ENCODE measurements at regions of chr12 and their contacts with region 1.

Region 1: DNA sequence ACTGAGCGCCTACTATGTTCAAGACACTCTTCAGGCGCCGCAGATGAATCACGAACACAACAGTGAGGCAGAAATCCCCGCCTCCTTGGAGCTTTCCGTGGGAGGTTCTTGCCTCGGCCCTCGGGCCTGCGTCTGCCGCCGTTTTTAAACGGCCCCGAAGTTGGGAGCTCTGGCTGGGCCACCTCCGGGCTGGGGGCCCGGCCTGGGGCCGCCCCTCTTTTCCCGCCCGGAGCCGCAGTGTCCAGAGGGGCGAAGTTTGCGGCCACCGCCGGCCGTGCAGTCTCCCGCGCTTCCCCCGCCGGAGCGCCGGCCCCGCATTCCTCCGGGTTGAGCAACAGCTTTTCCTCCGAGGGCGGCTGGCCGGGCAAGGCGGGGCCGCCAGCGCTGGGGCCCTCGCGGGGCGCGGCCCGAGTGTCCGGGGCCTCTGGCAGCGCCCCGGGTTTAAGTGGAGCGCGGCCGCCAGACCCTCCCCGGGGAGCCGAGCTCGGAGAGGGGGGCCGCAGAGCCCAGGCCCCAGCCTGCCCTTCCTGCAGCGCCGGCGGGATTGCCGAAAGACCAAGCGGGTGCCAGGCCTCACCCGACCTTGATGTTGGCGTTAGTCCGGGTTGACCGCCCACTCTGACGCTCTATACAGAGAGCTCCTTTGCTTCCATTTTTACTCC is 18.7 kb upstream of the CTDSP2 start:
- DNase-seq: peak; percentile 91
- H3K4me3 ChIP-seq: peak overlapping the region; percentile 38 to 63 (median 54)
- H3K27ac ChIP-seq: peak overlapping the region; percentile 90 to 99 (median 96)
- H3K4me1 ChIP-seq: peaks cover 0 to 61% (median 48%) of the 10 kb centered on the region in 4 donors
- H3K27me3 ChIP-seq: no peaks in the 10 kb centered on the region
- CTCF ChIP-seq: no peak
- EP300 ChIP-seq: peak in 2 of 4 donors; percentile 2 to 12
- POLR2A ChIP-seq: peak; percentile 51 to 65

Region 2: DNA sequence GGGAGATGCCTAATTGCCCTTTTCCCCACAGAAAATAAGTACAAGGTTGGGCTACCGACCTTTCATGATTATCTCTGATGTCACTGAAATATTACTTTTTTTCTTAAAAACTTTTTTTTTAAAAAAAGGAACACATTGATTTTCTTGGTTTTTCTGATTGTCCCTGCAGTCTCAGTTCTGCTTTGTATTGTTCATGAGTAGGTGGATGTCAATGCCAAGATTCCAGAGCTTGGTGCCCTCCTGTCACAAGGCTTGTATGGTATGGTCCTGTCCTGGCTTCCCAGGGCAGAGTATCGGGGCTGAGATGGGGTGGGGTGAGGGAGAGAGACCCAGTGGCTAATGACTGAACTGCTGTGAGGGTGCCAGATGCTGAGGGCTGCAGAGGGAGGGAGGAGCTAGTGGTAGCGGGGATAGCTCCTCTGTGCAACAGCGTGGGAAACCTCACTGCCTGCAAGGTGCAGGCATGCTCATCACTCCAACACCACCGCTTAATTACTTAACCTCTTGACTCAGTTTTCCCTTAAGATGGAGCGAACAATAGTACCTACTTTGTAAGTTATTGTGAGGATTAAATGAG is 14.3 kb before region 1 on chr12:
- intact Hi-C with region 1: loop called (anchors 2 kb)
- DNase-seq: no peak
- H3K4me3 ChIP-seq: no peak overlapping the region
- H3K27ac ChIP-seq: peak overlapping the region; percentile 26 to 100 (median 92)
- H3K4me1 ChIP-seq: peaks cover 0 to 55% (median 38%) of the 10 kb centered on the region in 4 donors
- H3K27me3 ChIP-seq: no peaks in the 10 kb centered on the region
- CTCF ChIP-seq: no peak
- EP300 ChIP-seq: no peak
- POLR2A ChIP-seq: no peak

Region 3: GRCh38 chr12:57893431-57894353 is 28.5 kb after region 1 on chr12:
- intact Hi-C with region 1: loop called (anchors 1 kb)
- DNase-seq: peak; percentile 100
- H3K4me3 ChIP-seq: peak overlapping the region in 2 of 4 donors; percentile 14 to 21
- H3K27ac ChIP-seq: peak overlapping the region; percentile 93 to 99 (median 98)
- H3K4me1 ChIP-seq: peaks cover 4 to 97% (median 92%) of the 10 kb centered on the region in 4 donors
- H3K27me3 ChIP-seq: no peaks in the 10 kb centered on the region
- CTCF ChIP-seq: peak in 1 of 4 experiments; percentile 54
- EP300 ChIP-seq: peak; percentile 9 to 87 (median 68)
- POLR2A ChIP-seq: no peak

Measured in sigmoid colon (tissue), 7 donors.